ENCODE measurements at regions of chr22 and their contacts with region 1.

Region 1: GRCh38 chr22:17171313-17172171 is 12.5 kb upstream of the HDHD5 start:
- DNase-seq: peak; percentile 81 to 89 (median 86)
- H3K4me3 ChIP-seq: peak overlapping the region; percentile 61
- H3K27ac ChIP-seq: peak overlapping the region; percentile 74 to 76
- H3K4me1 ChIP-seq: peaks cover 10% of the 10 kb centered on the region
- H3K27me3 ChIP-seq: no peaks in the 10 kb centered on the region
- CTCF ChIP-seq: peak; percentile 66 to 94 (median 89)
- EP300 ChIP-seq: no peak
- POLR2A ChIP-seq: peak; percentile 44

Region 2: GRCh38 chr22:17121227-17122195 is 50.0 kb before region 1 on chr22 and contains the start of gene TMEM121B:
- intact Hi-C with region 1: no loop called
- DNase-seq: peak; percentile 21 to 53 (median 31)
- H3K4me3 ChIP-seq: peak within 1 kb of the TSS; percentile 38
- H3K27ac ChIP-seq: no peak within 1 kb of the TSS
- H3K4me1 ChIP-seq: peaks cover 7% of the 10 kb centered on the region
- H3K27me3 ChIP-seq: peaks cover 5% of the 10 kb centered on the region
- CTCF ChIP-seq: no peak
- EP300 ChIP-seq: no peak
- POLR2A ChIP-seq: no peak
- total RNA-seq, gene TMEM121B: 0.12 to 1.1 (median 0.53) TPM

Region 3: GRCh38 chr22:17281440-17281841 is 109.9 kb after region 1 on chr22:
- intact Hi-C with region 1: no loop called
- DNase-seq: no peak
- H3K4me3 ChIP-seq: no peak overlapping the region
- H3K27ac ChIP-seq: no peak overlapping the region
- H3K4me1 ChIP-seq: no peaks in the 10 kb centered on the region
- H3K27me3 ChIP-seq: no peaks in the 10 kb centered on the region
- CTCF ChIP-seq: no peak
- EP300 ChIP-seq: no peak
- POLR2A ChIP-seq: no peak

Region 4: GRCh38 chr22:17492247-17492646 is 320.7 kb after region 1 on chr22:
- intact Hi-C with region 1: loop called in 1 of 4 experiments (anchors 10 kb)
- DNase-seq: peak in 2 of 5 donors; percentile 28 to 36
- H3K4me3 ChIP-seq: no peak overlapping the region
- H3K27ac ChIP-seq: peak overlapping the region in 1 of 2 donors; percentile 17
- H3K4me1 ChIP-seq: no peaks in the 10 kb centered on the region
- H3K27me3 ChIP-seq: no peaks in the 10 kb centered on the region
- CTCF ChIP-seq: no peak
- EP300 ChIP-seq: no peak
- POLR2A ChIP-seq: no peak

Region 5: GRCh38 chr22:17501679-17502285 is 330.2 kb after region 1 on chr22:
- intact Hi-C with region 1: loop called (anchors 5 to 10 kb)
- DNase-seq: peak in 1 of 5 donors; percentile 22
- H3K4me3 ChIP-seq: no peak overlapping the region
- H3K27ac ChIP-seq: no peak overlapping the region
- H3K4me1 ChIP-seq: no peaks in the 10 kb centered on the region
- H3K27me3 ChIP-seq: no peaks in the 10 kb centered on the region
- CTCF ChIP-seq: peak; percentile 21 to 62 (median 45)
- EP300 ChIP-seq: no peak
- POLR2A ChIP-seq: no peak